ENCODE measurements at regions of chr6 and their contacts with region 1.

Region 1: DNA sequence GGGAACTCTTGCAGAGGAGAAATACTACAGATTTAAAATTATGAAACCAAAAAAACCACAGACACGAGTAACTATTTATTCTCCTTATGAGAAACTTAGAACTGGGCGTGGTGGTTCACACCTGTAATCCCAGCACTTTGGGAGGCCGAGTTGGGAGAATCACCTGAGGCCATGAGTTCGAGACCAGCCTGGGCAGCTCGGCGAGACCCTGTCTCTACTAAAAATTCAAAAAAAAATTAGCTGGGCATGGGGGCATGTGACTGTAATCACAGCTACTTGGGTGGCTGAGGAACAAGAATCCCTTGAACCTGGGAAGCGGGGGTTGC is 36.8 kb downstream of the SSR1 start:
- DNase-seq: no peak
- H3K4me3 ChIP-seq: no peak overlapping the region
- H3K27ac ChIP-seq: no peak overlapping the region
- H3K4me1 ChIP-seq: peaks cover 0 to 4% (median 0%) of the 10 kb centered on the region in 4 experiments
- H3K27me3 ChIP-seq: no peaks in the 10 kb centered on the region

Region 2: DNA sequence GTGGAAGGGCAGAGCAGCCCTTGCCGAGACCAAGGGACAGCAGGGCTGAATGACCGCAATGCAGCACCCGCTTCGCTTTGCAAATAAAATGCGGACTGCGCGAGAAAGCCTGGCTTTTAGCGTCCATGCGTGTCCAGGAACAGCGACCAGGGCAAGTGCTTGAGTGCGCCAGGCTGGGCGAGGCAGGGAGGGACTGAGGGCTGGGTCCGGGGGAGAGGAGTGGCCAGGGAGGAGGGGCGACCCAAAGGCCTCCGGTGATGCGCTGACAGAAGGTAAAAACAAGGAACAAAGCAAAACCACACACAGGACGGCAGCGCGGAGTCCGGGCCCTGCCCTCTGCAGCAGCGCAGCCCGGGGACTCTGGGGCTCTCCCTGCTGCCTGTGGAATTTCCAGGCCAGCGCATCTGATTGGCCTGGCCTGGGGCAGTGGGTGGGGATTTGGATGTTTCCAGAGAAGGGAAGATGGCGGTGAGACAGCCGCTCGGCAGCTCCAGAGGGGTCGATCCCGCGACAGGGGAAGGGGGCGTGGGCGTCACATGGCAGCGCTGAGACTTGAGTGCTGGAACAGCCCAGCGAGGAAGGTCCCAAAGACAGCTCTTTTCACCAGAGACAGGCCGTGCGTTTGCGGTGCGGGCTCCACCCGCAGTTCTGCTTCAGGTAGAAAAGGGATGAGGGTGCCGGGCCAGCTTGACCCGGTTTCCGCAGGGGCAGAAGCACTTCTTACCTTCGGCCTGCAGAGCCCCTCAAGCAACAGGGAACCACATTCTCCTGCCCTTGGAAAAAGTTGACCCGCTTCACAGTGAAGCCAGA is 14.9 kb before region 1 on chr6:
- CTCF ChIA-PET with region 1: interaction called, 12 read pairs
- POLR2A ChIA-PET with region 1: no interaction called
- DNase-seq: peak; percentile 70 to 91 (median 88)
- H3K4me3 ChIP-seq: peak overlapping the region; percentile 10 to 79 (median 64)
- H3K27ac ChIP-seq: peak overlapping the region in 1 of 2 experiments; percentile 29
- H3K4me1 ChIP-seq: peaks cover 4 to 24% (median 13%) of the 10 kb centered on the region in 4 experiments
- H3K27me3 ChIP-seq: no peaks in the 10 kb centered on the region

Region 3: DNA sequence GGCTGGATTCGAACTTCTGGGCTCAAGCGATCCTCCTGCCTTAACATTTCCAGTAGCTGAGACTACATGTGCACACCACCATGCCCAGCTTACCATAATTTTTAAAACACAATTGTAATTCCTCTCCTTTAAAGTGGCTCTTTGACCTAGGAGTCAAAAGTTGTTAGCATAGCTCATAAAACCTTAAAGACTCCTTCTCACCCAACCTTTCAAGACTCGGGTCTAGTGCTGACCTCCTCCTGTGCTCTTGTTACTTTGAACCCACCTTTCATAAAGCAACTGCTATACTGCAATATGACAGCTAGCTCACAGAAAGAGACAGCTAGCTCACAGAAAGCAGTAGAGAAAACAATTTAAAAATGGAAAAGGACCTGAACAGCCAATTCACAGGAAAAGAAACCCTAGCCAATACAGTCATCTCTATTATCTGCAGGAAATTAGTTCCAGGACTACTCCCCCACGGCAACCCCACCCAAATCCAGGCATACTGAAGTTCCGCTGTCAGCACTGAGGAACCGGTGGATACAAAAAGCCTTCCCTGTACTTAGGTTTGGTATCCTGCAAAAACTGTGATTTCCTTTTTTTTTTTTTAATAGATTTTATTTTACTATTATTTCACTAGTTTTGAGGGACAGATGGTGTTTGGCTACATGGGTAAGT is 16.6 kb after region 1 on chr6:
- CTCF ChIA-PET with region 1: interaction called, 22 read pairs
- POLR2A ChIA-PET with region 1: no interaction called
- DNase-seq: no peak
- H3K4me3 ChIP-seq: no peak overlapping the region
- H3K27ac ChIP-seq: no peak overlapping the region
- H3K4me1 ChIP-seq: no peaks in the 10 kb centered on the region
- H3K27me3 ChIP-seq: no peaks in the 10 kb centered on the region

Region 4: DNA sequence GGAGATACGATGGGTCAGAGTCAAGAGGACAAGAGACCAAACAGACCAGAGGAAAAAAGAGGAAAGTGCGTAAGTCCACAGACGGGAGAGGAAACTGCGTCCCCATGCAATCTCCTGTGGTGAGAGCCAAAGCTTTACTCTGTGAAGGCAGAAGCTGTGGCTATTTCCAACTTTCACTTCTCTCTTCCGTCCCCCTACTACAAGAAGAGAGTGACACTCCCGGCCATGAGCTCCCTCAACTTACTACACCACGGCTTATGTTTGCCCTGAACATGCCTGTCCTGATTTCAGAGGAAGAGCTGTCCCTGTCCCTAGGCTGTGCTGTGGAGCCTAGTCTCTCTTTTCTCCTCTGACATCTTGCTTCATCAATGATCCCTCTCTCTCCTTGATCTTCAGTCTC is 48.4 kb after region 1 on chr6:
- CTCF ChIA-PET with region 1: interaction called, 12 read pairs
- POLR2A ChIA-PET with region 1: no interaction called
- DNase-seq: peak; percentile 28 to 68 (median 64)
- H3K4me3 ChIP-seq: peak overlapping the region in 5 of 7 experiments; percentile 17 to 72 (median 41)
- H3K27ac ChIP-seq: no peak overlapping the region
- H3K4me1 ChIP-seq: peaks cover 0 to 17% (median 7%) of the 10 kb centered on the region in 4 experiments
- H3K27me3 ChIP-seq: no peaks in the 10 kb centered on the region

Region 5: DNA sequence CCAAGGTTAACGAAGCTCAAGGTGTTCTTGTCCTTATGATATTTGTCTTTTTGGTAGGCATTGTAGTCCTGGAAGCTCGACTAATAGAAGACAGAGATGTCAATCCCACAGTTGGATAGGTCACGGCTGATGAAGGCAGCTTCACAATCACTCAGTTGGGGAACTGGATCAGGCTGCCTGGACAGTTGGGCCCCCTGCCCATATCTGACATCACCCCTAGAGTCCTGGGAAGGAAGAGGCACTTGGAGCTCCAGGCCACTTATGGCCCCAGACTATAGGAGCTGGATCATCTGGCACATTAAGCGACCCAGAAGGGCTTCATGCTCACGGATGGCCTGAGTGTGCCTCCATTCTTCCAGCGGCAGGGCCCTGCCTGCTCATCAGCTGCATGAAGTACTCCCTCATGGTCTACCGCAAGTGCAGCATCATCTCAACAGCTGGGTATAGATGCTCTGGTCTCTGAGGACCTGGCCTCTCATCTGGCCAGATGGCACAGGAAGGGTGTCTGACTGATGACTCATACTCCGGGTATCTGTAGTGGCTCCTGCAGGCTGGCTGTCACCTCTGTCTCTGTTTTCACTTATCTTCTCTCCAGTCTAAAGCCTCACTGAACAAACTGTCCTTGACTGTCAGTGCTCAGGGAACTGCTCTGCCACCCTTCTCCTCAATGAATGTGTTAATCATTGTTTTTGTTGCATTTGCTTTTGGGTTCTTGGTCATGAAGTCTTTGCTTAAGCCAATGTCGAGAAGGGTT is 66.0 kb after region 1 on chr6:
- CTCF ChIA-PET with region 1: interaction called, 19 read pairs
- POLR2A ChIA-PET with region 1: no interaction called
- DNase-seq: peak in 2 of 3 donors; percentile 56 to 65
- H3K4me3 ChIP-seq: no peak overlapping the region
- H3K27ac ChIP-seq: no peak overlapping the region
- H3K4me1 ChIP-seq: no peaks in the 10 kb centered on the region
- H3K27me3 ChIP-seq: no peaks in the 10 kb centered on the region

Region 6: DNA sequence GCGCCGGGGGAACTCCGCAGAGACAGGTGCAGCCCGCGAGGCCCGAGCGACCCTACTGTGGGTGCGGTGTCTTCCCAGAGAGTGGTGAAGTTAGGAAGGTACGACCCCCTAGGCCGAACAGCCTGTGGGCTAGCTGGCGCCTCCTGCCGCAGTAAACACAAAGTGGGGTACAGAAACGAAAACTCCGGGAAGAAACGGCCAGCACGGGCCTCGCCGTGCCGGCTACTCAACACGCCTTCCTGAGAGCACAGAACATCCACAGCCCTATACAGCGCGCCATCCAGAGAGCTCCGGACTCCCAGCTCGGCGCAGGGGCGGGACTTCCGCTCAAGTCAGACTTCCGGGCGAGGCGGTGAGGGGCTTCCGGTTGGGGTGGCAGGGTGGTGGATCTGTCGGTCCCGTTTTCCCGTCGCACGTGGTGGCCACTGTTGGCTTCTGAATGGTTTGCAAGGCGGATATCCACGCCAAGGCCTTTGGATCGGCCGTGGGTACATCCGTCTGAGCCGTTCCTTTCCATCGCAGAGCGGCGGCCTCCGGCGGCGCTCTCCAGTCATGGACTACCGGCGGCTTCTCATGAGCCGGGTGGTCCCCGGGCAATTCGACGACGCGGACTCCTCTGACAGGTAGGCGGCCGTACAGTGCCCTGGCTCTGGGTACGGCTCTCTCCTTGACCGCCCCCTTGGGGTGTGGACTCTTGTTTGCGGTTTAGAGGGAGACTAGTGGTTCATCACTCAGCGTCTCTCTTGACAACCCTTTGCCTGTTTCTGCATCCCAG is 113.5 kb after region 1 on chr6 and contains the starts of genes CAGE1 and RIOK1:
- CTCF ChIA-PET with region 1: interaction called, 12 read pairs
- POLR2A ChIA-PET with region 1: no interaction called
- DNase-seq: peak; percentile 97 to 99 (median 98)
- H3K4me3 ChIP-seq: peak within 1 kb of the TSS; percentile 79 to 97 (median 85)
- H3K27ac ChIP-seq: peak within 1 kb of the TSS; percentile 95 to 96
- H3K4me1 ChIP-seq: peaks cover 16 to 30% (median 24%) of the 10 kb centered on the region in 4 experiments
- H3K27me3 ChIP-seq: no peaks in the 10 kb centered on the region

Region 7: DNA sequence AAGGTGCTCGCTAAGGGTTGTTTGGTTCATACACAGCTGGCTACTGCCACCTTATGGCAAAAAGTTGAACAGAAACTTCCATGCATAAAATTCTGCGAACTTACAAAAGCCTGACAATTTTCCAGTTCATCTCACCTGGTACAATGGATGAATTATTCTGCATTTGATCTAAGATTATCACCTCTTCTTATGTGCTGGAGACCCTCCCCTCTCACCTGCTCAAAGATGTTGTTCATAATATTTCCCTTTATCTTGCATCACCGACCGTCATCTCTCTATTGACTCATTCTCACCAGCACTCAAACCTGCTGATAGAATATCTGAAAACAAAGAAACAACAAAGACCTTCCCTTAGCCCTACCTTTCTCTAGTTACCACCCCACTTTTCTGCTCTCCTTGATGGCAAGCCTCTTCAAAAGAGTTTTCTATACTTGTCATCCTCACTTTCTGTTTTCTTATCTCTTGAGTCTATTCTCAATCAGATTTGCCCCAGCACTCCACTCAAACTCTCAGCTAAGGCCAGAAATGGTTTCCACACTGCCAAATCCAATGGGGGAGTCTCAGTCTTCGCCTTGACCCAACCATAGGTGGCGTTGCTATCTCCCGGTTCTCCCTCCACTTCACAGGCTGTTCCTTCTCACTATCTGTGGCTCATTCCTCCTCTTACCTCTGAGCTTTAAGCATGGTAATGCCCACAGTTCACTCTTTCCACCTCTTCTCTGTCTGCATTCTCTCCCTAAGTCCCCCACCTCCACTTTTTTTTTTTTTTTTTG is 339.6 kb after region 1 on chr6:
- CTCF ChIA-PET with region 1: interaction called, 32 read pairs
- POLR2A ChIA-PET with region 1: no interaction called
- DNase-seq: peak; percentile 58 to 76 (median 68)
- H3K4me3 ChIP-seq: peak overlapping the region in 1 of 7 experiments; percentile 64
- H3K27ac ChIP-seq: no peak overlapping the region
- H3K4me1 ChIP-seq: peaks cover 2 to 21% (median 18%) of the 10 kb centered on the region in 4 experiments
- H3K27me3 ChIP-seq: no peaks in the 10 kb centered on the region